ENCODE measurements at regions of chr16 and their contacts with region 1.

Region 1: DNA sequence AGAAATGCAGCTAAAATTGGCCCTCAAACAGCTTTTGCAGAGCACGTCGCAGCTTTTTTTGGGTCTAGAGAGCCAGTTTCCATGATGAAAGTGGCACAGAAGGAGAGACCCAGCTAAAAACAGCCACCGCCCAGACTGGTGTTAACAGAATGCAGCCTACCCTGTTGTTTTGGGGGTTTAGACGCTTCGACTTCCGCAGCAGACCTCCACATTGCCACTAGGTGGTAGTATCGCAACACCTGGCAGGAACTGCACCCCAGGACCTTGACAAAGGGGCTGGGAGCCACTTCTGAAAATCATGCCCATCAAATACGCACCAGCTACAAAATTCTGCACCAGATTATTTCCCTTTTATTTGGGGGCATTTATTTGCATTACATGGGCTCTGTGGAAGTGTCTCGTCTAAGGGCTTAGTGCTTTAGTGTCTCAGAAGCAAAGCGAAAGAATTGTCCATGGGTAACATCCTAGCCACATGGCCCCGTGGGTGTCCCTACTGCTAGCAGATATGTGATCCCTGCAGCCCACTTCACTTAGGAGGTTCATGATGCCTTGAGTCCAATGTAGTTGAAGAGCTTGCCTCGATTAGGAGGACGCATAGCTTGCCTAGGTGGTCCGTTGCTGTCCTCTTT is 167.1 kb downstream of the HAPSTR1 start:
- DNase-seq: peak; percentile 31
- ATAC-seq: peak; percentile 57 to 59

Region 2: DNA sequence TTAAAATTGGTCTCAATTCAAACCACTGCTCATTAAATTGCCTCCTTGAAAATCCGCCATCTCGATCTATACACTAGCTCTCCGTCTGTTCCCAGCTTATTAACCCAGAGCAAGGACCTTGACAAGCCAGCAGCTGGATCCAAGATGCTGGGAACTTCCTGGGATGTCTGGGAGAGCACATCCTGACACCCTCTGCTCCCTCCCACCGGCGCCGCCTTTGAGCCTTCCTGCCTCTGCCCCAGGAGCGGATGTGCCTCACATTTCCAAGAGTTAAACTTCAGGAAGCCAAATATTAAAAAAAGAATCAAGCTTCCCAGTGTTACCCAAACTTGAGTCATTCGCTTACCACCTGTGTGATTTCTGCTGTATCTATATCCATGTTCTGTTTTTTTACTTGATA is 59.2 kb before region 1 on chr16:
- intact Hi-C with region 1: no loop called
- DNase-seq: no peak
- ATAC-seq: no peak

Region 3: DNA sequence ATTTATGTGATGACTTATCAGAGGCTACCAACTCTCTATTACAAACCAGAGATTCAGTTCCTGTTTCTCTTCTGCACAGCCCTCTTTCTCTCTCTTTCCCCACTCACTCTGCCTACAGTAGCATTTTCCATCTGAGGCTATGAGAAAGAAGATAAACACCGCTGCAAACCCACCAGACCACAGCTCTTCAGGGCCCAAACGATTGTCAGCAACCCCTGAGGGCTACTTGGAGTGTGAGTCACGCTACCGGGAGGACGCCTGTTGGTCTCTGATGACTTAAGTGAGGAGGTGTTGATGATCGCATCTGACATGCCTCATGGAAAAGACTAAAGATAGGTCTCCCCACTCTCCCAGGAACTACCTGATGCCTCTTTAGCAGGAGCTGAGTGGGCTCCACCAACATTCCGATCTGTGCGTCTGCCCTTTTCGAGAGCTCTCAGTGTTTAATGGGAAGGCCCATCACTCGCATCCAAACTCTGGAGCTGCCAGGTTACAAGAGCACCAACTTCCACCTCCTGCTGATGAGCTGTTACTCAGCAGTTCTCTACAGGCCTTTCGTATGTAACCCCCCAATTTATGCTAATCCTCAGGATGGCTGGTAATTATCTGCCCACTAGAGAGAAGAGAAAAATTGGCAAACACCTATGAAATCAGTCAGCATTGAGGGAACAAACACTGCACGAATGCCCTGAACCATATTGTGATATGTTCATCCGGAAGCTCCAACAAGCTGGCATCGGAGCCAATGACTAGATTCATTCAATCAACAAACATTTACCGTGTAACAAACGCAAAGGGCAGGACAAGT is 914.5 kb after region 1 on chr16:
- intact Hi-C with region 1: loop called in 1 of 2 experiments (anchors 10 kb)
- DNase-seq: no peak
- ATAC-seq: no peak